ENCODE measurements at regions of chr9 and their contacts with region 1.

Region 1: DNA sequence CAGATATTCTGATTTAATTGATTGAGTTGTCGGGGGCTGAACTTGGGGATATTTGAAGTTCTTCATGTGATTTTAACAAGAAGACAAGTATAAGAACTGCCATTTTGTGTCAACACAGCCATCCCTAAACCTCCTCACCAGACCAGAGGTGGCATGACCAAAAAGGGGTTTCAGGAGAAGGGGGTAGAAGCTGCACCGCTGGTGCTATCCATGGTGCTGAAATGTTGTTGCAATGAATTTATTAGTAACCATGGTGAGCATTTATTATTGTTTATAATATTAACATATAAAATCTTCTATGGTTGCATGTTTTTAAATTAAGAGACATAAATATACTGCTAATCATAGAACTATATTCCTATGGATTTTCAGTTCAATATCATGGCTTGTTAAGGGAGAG is 72.3 kb downstream of the GNA14 start:
- DNase-seq: peak; percentile 22
- ATAC-seq: no peak
- H3K4me3 Mint-ChIP-seq: no peak overlapping the region
- H3K27ac Mint-ChIP-seq: no peak overlapping the region
- H3K4me1 Mint-ChIP-seq: no peaks in the 10 kb centered on the region
- H3K27me3 Mint-ChIP-seq: peaks cover 4% of the 10 kb centered on the region
- CTCF ChIP-seq: no peak

Region 2: DNA sequence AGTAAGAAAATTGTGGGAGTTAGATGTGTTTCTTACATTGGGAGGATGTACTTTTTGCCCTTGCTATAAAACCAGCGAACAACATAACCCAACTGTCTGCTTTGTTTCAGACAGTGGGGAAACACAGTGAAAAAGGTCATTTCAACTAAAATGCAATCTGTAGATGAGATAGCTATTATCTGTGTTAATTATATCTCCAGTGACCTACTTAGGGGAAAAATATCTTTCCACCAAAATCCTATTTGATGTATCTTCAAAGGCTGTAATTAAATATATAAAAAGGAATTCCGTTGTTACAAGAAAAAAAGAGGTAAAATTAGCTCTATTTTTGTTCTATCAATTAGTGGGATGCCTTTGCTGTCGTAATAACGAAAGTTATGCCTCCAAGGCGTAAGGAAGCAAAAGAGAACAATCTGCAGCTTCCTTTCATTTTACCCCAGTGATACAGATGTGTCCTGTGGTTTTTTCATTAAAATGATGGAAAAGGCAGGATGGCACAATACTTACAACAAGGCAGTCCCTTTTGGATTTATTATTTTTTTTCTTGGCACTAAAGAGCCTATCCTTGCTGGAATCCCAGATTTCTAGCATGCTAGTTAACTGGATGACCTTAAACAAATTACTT is 28.6 kb before region 1 on chr9:
- CTCF ChIA-PET with region 1: no interaction called
- POLR2A ChIA-PET with region 1: no interaction called
- intact Hi-C with region 1: no loop called
- DNase-seq: no peak
- ATAC-seq: no peak
- H3K4me3 Mint-ChIP-seq: no peak overlapping the region
- H3K27ac Mint-ChIP-seq: no peak overlapping the region
- H3K4me1 Mint-ChIP-seq: no peaks in the 10 kb centered on the region
- H3K27me3 Mint-ChIP-seq: no peaks in the 10 kb centered on the region
- CTCF ChIP-seq: no peak

Region 3: GRCh38 chr9:77616191-77616590 is 40.4 kb after region 1 on chr9:
- CTCF ChIA-PET with region 1: no interaction called
- POLR2A ChIA-PET with region 1: no interaction called
- intact Hi-C with region 1: no loop called
- DNase-seq: no peak
- ATAC-seq: no peak
- H3K4me3 Mint-ChIP-seq: no peak overlapping the region
- H3K27ac Mint-ChIP-seq: no peak overlapping the region
- H3K4me1 Mint-ChIP-seq: no peaks in the 10 kb centered on the region
- H3K27me3 Mint-ChIP-seq: no peaks in the 10 kb centered on the region
- CTCF ChIP-seq: no peak

Region 4: GRCh38 chr9:77648234-77649120 is 72.7 kb after region 1 on chr9 and contains the start of gene GNA14:
- CTCF ChIA-PET with region 1: no interaction called
- POLR2A ChIA-PET with region 1: no interaction called
- intact Hi-C with region 1: loop called (anchors 10 kb)
- DNase-seq: peak; percentile 21
- ATAC-seq: peak; percentile 34
- H3K4me3 Mint-ChIP-seq: peak within 1 kb of the TSS; percentile 68
- H3K27ac Mint-ChIP-seq: no peak within 1 kb of the TSS
- H3K4me1 Mint-ChIP-seq: peaks cover 10% of the 10 kb centered on the region
- H3K27me3 Mint-ChIP-seq: peaks cover 43% of the 10 kb centered on the region
- CTCF ChIP-seq: no peak
- total RNA-seq, gene GNA14: not detected

Measured in activated CD8-positive, alpha-beta T cell treated with anti-CD3 and anti-CD28 coated beads for 36 hours (primary cell).